Endothelial cell of umbilical vein (primary cell): ENCODE measurements at regions of chr7 and their contacts with region 1.

Region 1: GRCh38 chr7:40232242-40232893 is 97.6 kb downstream of the SUGCT start:
- DNase-seq: peak; percentile 79
- H3K4me3 ChIP-seq: no peak overlapping the region
- H3K27ac ChIP-seq: no peak overlapping the region
- H3K4me1 ChIP-seq: no peaks in the 10 kb centered on the region
- H3K27me3 ChIP-seq: no peaks in the 10 kb centered on the region
- CTCF ChIP-seq: peak; percentile 42 to 43
- POLR2A ChIP-seq: no peak

Region 2: GRCh38 chr7:40199076-40199802 is 33.1 kb before region 1 on chr7:
- CTCF ChIA-PET with region 1: interaction called, 23 read pairs
- POLR2A ChIA-PET with region 1: no interaction called
- dilution Hi-C with region 1: no loop called
- intact Hi-C with region 1: no loop called
- DNase-seq: peak; percentile 51
- H3K4me3 ChIP-seq: no peak overlapping the region
- H3K27ac ChIP-seq: no peak overlapping the region
- H3K4me1 ChIP-seq: peaks cover 2% of the 10 kb centered on the region
- H3K27me3 ChIP-seq: no peaks in the 10 kb centered on the region
- CTCF ChIP-seq: peak; percentile 22 to 28
- POLR2A ChIP-seq: no peak

Region 3: GRCh38 chr7:40311307-40311706 is 78.9 kb after region 1 on chr7:
- CTCF ChIA-PET with region 1: interaction called, 19 read pairs
- POLR2A ChIA-PET with region 1: no interaction called
- dilution Hi-C with region 1: no loop called
- intact Hi-C with region 1: no loop called
- DNase-seq: peak; percentile 39
- H3K4me3 ChIP-seq: no peak overlapping the region
- H3K27ac ChIP-seq: peak overlapping the region; percentile 71
- H3K4me1 ChIP-seq: peaks cover 34% of the 10 kb centered on the region
- H3K27me3 ChIP-seq: no peaks in the 10 kb centered on the region
- CTCF ChIP-seq: no peak
- POLR2A ChIP-seq: no peak

Region 4: DNA sequence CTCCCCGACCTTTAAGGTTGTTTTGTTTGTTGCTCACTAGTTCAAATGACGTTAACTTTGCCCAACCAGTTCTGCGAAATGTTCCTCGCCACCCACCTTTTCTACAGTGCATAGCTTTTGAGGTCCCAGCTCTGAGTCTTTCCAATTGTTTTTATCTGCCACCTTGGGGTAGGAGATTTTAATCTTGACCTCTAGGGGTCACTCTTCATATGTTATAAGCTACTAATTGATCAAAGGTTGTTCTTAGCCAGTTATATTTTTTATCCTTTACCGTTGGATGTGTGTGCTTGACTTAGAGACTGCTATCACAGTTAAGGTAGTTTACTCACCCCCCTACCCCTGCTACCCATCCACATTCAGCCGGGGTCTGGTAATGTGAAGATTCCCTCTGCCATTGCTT is 274.8 kb after region 1 on chr7:
- CTCF ChIA-PET with region 1: interaction called, 15 read pairs
- POLR2A ChIA-PET with region 1: no interaction called
- dilution Hi-C with region 1: no loop called
- intact Hi-C with region 1: loop called (anchors 10 kb)
- DNase-seq: no peak
- H3K4me3 ChIP-seq: no peak overlapping the region
- H3K27ac ChIP-seq: no peak overlapping the region
- H3K4me1 ChIP-seq: no peaks in the 10 kb centered on the region
- H3K27me3 ChIP-seq: no peaks in the 10 kb centered on the region
- CTCF ChIP-seq: peak in 1 of 2 donors; percentile 19
- POLR2A ChIP-seq: no peak

Region 5: GRCh38 chr7:40733578-40733977 is 501.2 kb after region 1 on chr7:
- CTCF ChIA-PET with region 1: no interaction called
- POLR2A ChIA-PET with region 1: no interaction called
- dilution Hi-C with region 1: no loop called
- intact Hi-C with region 1: no loop called
- DNase-seq: peak; percentile 52
- H3K4me3 ChIP-seq: no peak overlapping the region
- H3K27ac ChIP-seq: no peak overlapping the region
- H3K4me1 ChIP-seq: peaks cover 12% of the 10 kb centered on the region
- H3K27me3 ChIP-seq: peaks cover 18 to 31% of the 10 kb centered on the region in 2 experiments
- CTCF ChIP-seq: no peak
- POLR2A ChIP-seq: no peak

Region 6: DNA sequence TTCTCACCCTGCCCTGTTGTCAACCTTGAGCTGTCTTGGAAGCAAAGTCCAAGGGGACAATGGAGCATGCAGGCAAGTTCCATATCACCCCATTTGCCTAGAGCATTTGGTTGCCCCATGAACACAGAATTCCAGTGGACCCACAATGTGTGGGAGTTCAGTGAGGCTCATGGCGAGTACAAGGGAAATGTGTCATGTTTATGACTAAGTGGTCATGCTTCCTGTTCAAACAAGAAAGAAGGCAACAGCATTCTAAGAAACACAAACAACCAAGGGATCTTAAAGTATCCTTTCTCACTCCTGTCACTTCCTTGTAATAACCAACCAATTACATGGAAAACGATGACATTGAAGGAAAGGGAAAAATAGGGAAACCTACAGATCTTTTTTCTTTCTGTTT is 957.5 kb after region 1 on chr7:
- CTCF ChIA-PET with region 1: no interaction called
- POLR2A ChIA-PET with region 1: no interaction called
- dilution Hi-C with region 1: no loop called
- intact Hi-C with region 1: loop called (anchors 1 kb)
- DNase-seq: peak; percentile 97
- H3K4me3 ChIP-seq: no peak overlapping the region
- H3K27ac ChIP-seq: peak overlapping the region; percentile 100
- H3K4me1 ChIP-seq: peaks cover 42% of the 10 kb centered on the region
- H3K27me3 ChIP-seq: no peaks in the 10 kb centered on the region
- CTCF ChIP-seq: no peak
- POLR2A ChIP-seq: peak; percentile 62

Region 7: DNA sequence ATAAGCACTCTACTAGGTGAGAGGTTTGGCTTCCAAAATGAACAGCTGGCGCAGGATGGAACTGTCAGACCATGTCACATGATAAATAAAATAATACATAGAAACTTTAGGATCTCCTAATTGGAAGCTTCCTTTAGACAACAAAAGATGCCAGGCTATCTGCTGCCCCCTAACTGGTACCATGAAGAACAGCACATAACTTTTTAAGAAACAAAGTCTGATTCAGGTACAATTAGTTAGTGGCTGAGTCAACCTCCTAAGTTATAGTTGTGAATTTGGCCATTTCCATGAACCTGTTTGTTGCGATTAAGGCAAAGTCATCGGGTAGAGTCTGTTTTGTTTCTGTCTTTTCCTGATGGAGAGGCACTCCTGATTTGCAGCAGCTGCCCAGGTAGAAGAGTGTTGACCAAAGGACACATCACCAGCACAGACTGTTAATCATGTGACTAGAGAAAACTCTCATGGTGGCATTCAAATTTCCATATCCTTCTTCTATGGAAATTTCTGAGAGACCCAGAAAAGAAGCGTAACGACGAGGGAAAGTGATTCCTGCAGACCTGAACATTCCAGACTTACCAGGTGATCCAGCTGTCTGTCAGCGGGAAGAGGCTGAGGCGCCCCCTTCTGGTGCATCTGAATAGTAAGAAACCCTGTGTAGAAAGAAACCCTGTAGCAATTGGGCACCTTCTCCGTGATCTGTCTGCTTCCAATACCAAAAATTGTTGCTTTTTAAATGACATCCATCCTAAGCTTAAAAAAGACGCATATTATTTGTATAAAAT is 1479.1 kb after region 1 on chr7:
- CTCF ChIA-PET with region 1: interaction called, 92 read pairs
- POLR2A ChIA-PET with region 1: no interaction called
- dilution Hi-C with region 1: no loop called
- intact Hi-C with region 1: loop called (anchors 1 kb)
- DNase-seq: peak; percentile 48
- H3K4me3 ChIP-seq: no peak overlapping the region
- H3K27ac ChIP-seq: no peak overlapping the region
- H3K4me1 ChIP-seq: no peaks in the 10 kb centered on the region
- H3K27me3 ChIP-seq: peaks cover 0 to 2% of the 10 kb centered on the region in 2 experiments
- CTCF ChIP-seq: peak; percentile 52 to 69
- POLR2A ChIP-seq: no peak